ENCODE measurements at regions of chr7 and their contacts with region 1.

Region 1: DNA sequence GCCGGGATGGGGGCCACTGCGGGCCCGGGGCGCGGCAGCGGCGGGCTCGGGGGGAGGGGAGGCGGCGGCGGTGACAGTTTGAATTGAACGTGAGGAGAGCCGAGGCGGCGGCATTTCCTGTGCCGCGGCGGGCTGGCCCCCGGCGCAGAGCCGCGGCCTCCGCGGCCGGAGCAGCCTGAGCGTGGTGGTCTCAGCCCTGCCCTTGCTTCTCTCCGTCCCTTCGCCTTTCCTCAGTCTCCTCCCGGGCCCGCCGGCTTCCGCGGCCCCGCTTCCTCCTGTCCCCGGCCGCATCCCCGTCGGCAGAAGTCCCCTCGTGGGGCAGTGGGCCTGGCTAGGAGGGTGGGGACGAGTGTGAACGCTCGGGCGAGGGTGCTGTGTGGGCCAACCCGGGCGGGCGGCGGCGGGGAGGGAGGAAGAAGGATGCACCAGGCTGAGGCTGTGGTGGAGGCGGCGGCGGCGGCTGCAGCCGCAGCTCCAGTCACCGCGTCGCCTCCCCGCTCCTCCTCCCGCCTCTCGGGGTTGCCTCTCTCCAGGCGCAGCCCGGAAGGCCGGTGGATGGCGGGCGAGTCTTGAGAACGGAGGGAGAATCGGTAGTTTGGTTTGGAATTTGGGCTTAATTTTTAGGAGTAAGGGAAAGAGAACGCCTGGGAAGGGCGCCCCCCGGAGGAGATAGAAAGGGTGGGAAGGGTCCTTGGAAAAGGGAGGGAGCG is 690 bp downstream of the SEPTIN7 start:
- DNase-seq: peak; percentile 68 to 90
- H3K4me3 ChIP-seq: peak overlapping the region; percentile 81 to 96 (median 86)
- H3K27ac ChIP-seq: peak overlapping the region; percentile 93 to 100 (median 98)
- H3K4me1 ChIP-seq: peaks cover 14 to 60% (median 46%) of the 10 kb centered on the region in 4 donors
- H3K27me3 ChIP-seq: no peaks in the 10 kb centered on the region
- CTCF ChIP-seq: peak in 3 of 7 experiments; percentile 23 to 47 (median 37)
- EP300 ChIP-seq: no peak
- POLR2A ChIP-seq: no peak

Region 2: GRCh38 chr7:35450456-35451214 is 350.9 kb before region 1 on chr7:
- intact Hi-C with region 1: no loop called
- DNase-seq: no peak
- H3K4me3 ChIP-seq: no peak overlapping the region
- H3K27ac ChIP-seq: no peak overlapping the region
- H3K4me1 ChIP-seq: peaks cover 0 to 11% (median 6%) of the 10 kb centered on the region in 4 donors
- H3K27me3 ChIP-seq: peaks cover 0 to 29% (median 13%) of the 10 kb centered on the region in 3 donors
- CTCF ChIP-seq: no peak
- EP300 ChIP-seq: no peak
- POLR2A ChIP-seq: no peak

Region 3: DNA sequence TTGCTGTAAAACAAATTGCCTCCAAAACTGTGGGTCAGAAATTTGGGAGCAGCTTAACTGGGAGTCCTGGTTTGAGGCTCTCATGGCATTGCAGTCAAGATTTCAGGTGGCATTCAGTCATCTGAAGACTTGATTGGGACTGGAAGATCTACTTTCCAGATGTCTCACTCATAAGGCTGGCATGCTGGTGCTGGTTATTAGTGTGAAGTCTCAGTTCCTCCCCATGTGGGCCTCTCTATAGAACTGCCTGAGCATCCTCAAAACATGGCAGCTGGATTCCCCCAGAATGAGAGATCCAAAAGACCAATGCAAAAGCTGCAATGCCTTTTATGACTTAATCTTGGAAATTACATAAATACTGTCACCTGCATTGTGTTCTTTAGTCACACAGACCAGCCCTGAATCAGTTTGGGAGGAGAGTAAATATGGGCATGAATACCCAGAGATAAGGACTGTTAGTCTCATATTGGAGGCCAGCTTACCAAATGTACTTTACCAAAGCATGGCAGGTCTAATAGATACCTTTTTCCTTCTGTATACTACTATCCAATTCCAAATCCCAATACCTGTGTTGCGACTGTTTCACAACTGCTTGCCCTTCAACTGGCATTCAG is 100.2 kb before region 1 on chr7:
- intact Hi-C with region 1: loop called (anchors 10 kb)
- DNase-seq: no peak
- H3K4me3 ChIP-seq: no peak overlapping the region
- H3K27ac ChIP-seq: no peak overlapping the region
- H3K4me1 ChIP-seq: peaks cover 0 to 11% (median under 1%) of the 10 kb centered on the region in 4 donors
- H3K27me3 ChIP-seq: no peaks in the 10 kb centered on the region
- CTCF ChIP-seq: no peak
- EP300 ChIP-seq: no peak
- POLR2A ChIP-seq: no peak

Region 4: GRCh38 chr7:36280840-36281812 is 479.6 kb after region 1 on chr7:
- intact Hi-C with region 1: no loop called
- DNase-seq: peak; percentile 69 to 85
- H3K4me3 ChIP-seq: peak overlapping the region in 2 of 4 donors; percentile 18 to 25
- H3K27ac ChIP-seq: peak overlapping the region; percentile 15 to 80 (median 77)
- H3K4me1 ChIP-seq: peaks cover 25 to 93% (median 41%) of the 10 kb centered on the region in 4 donors
- H3K27me3 ChIP-seq: no peaks in the 10 kb centered on the region
- CTCF ChIP-seq: no peak
- EP300 ChIP-seq: no peak
- POLR2A ChIP-seq: no peak